ENCODE measurements at regions of chr17 and their contacts with region 1.

Region 1: GRCh38 chr17:39980351-39981206 is at the start of gene PSMD3:
- DNase-seq: peak; percentile 90 to 99 (median 98)
- ATAC-seq: peak; percentile 90 to 94
- H3K4me3 Mint-ChIP-seq: peak within 1 kb of the TSS; percentile 91 to 96 (median 94)
- H3K27ac Mint-ChIP-seq: peak within 1 kb of the TSS; percentile 90 to 98 (median 96)
- H3K4me1 Mint-ChIP-seq: peaks cover 21 to 48% (median 39%) of the 10 kb centered on the region in 4 donors
- H3K27me3 Mint-ChIP-seq: no peaks in the 10 kb centered on the region
- polyA plus RNA-seq, gene PSMD3: 45.4 to 55.9 (median 51.5) TPM

Region 2: GRCh38 chr17:39872751-39873150 is 107.8 kb before region 1 on chr17:
- POLR2A ChIA-PET with region 1: interaction called, 10 read pairs
- DNase-seq: peak in 1 of 10 donors; percentile 32
- ATAC-seq: no peak
- H3K4me3 Mint-ChIP-seq: no peak overlapping the region
- H3K27ac Mint-ChIP-seq: no peak overlapping the region
- H3K4me1 Mint-ChIP-seq: peaks cover 2 to 17% (median 12%) of the 10 kb centered on the region in 4 donors
- H3K27me3 Mint-ChIP-seq: peaks cover 0 to 1% (median 0%) of the 10 kb centered on the region in 5 donors

Region 3: GRCh38 chr17:39927101-39927928 is 53.3 kb before region 1 on chr17 and contains the starts of genes LRRC3C and ORMDL3:
- POLR2A ChIA-PET with region 1: interaction called, 45 read pairs
- DNase-seq: peak; percentile 85 to 93 (median 90)
- ATAC-seq: peak; percentile 69 to 72
- H3K4me3 Mint-ChIP-seq: peak within 1 kb of the TSS; percentile 87 to 99 (median 92)
- H3K27ac Mint-ChIP-seq: peak within 1 kb of the TSS; percentile 93 to 98 (median 96)
- H3K4me1 Mint-ChIP-seq: peaks cover 24 to 55% (median 50%) of the 10 kb centered on the region in 4 donors
- H3K27me3 Mint-ChIP-seq: no peaks in the 10 kb centered on the region
- polyA plus RNA-seq, gene LRRC3C: not detected
- polyA plus RNA-seq, gene ORMDL3: 100 to 335 (median 249) TPM

Region 4: DNA sequence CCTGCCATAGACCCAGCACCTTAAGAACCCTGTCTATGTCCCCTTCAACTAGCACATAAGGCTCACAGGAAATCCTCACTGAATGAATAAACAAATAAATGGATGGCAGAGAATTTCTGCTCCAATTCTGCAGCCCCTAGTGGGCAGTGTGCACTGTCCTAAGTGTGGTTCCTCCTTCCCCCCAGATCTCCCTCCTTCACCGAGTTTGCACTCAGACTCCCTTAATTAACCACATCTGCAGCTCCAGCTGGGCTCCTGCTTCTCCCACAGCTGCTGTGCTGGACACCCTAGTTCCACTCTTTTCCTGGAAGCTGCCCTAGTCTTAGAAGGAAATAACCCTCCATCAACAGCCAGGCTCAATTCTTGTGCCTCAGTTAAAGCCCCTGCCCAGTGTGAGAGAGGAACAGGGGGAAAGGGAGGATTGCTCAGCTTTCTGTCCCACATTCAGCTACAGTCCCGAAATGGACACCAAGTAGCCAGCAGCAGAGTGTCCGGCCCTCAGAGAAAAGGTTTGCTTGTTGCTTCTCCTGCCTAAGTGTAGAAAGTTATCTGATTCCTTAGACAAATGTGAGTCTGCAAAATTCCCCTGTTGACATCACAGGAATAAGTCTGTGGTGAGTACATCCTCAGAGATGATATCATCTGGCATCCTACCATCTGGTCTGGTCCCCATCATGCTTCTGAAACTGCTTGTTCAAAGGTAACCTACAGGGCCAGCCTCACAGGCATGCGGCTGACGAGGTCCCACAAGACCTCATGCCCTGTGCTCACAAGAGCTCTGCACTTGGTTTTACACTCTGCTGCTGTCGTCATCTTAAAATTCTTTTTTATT is 40.8 kb before region 1 on chr17:
- POLR2A ChIA-PET with region 1: no interaction called
- DNase-seq: peak in 6 of 10 donors; percentile 47 to 84 (median 54)
- ATAC-seq: peak; percentile 97 to 98
- H3K4me3 Mint-ChIP-seq: peak overlapping the region in 3 of 10 donors; percentile 0 to 19 (median 9)
- H3K27ac Mint-ChIP-seq: peak overlapping the region; percentile 12 to 96 (median 64)
- H3K4me1 Mint-ChIP-seq: peaks cover 7 to 17% (median 12%) of the 10 kb centered on the region in 4 donors
- H3K27me3 Mint-ChIP-seq: no peaks in the 10 kb centered on the region

Region 5: DNA sequence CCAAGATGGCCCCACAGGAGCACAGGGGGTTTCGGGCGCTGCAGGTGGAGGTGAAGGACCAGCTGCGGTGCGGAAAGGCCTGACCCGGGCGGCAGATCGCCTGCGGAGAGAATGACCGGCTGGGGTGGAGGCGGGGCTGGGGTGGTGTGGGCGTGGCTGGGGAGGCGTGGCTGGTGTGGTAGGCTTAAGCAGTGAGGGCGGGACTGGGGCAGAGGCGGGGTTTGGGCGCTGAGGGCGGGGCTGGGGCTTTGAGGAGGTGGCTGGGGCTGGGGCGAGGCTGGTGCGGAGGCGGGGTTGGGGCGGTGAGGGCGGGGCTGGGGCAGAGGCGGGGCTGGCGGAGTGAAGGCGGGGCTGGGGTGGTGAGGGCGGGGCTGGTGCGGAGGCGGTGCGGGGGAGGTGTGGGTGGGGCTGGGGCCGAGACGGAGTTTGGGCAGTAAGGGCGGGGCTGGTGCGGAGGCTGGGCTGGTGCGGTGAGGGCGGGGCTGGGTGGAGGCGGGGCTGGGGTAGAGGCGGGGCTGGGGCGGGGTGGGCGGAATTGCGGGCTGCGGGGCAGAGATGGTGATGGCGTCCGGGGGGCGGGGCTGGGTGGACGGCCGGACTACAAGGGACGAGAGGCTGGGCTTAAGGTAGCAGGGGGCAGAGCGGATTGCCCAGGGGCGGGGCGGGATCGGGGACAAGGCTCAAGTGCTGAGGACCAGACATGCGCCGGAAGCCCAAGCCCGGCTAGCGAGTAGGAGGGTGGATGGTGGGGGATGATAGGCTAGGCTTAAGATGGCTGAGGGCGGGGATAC is 27.7 kb before region 1 on chr17:
- POLR2A ChIA-PET with region 1: interaction called, 29 read pairs
- DNase-seq: peak; percentile 85 to 99 (median 92)
- ATAC-seq: peak; percentile 85 to 87
- H3K4me3 Mint-ChIP-seq: peak overlapping the region; percentile 78 to 93 (median 84)
- H3K27ac Mint-ChIP-seq: peak overlapping the region; percentile 65 to 95 (median 88)
- H3K4me1 Mint-ChIP-seq: peaks cover 7 to 35% (median 31%) of the 10 kb centered on the region in 4 donors
- H3K27me3 Mint-ChIP-seq: no peaks in the 10 kb centered on the region

Region 6: DNA sequence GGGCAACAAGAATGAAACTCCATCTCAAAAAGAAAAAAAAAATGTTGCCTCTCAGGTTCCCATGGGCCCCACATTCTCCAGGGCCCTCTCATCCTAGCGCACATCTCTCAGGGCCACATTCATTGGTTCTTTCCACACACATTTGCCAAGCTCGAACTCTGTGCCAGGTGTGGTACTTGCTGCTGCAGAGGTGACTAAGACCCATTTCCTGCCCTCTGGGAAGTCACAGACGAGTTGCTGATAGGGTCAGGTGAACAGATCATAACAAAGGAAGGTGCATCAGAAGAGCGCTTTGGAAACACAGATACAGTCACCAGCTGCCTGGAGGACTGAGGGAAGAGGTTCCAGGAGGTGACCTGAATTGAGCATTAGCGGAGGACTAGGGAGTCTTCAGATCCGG is 16.8 kb before region 1 on chr17:
- POLR2A ChIA-PET with region 1: interaction called, 29 read pairs
- DNase-seq: peak in 4 of 10 donors; percentile 26 to 71 (median 39)
- ATAC-seq: peak; percentile 76 to 80
- H3K4me3 Mint-ChIP-seq: peak overlapping the region in 8 of 10 donors; percentile 19 to 78 (median 56)
- H3K27ac Mint-ChIP-seq: peak overlapping the region; percentile 2 to 98 (median 78)
- H3K4me1 Mint-ChIP-seq: peaks cover 16 to 38% (median 35%) of the 10 kb centered on the region in 4 donors
- H3K27me3 Mint-ChIP-seq: peaks cover 0 to 3% (median 0%) of the 10 kb centered on the region in 5 donors

Region 7: GRCh38 chr17:40000161-40000560 is 19.6 kb after region 1 on chr17:
- POLR2A ChIA-PET with region 1: no interaction called
- DNase-seq: no peak
- ATAC-seq: no peak
- H3K4me3 Mint-ChIP-seq: no peak overlapping the region
- H3K27ac Mint-ChIP-seq: peak overlapping the region in 1 of 10 donors; percentile 15
- H3K4me1 Mint-ChIP-seq: no peaks in the 10 kb centered on the region
- H3K27me3 Mint-ChIP-seq: no peaks in the 10 kb centered on the region

Region 8: DNA sequence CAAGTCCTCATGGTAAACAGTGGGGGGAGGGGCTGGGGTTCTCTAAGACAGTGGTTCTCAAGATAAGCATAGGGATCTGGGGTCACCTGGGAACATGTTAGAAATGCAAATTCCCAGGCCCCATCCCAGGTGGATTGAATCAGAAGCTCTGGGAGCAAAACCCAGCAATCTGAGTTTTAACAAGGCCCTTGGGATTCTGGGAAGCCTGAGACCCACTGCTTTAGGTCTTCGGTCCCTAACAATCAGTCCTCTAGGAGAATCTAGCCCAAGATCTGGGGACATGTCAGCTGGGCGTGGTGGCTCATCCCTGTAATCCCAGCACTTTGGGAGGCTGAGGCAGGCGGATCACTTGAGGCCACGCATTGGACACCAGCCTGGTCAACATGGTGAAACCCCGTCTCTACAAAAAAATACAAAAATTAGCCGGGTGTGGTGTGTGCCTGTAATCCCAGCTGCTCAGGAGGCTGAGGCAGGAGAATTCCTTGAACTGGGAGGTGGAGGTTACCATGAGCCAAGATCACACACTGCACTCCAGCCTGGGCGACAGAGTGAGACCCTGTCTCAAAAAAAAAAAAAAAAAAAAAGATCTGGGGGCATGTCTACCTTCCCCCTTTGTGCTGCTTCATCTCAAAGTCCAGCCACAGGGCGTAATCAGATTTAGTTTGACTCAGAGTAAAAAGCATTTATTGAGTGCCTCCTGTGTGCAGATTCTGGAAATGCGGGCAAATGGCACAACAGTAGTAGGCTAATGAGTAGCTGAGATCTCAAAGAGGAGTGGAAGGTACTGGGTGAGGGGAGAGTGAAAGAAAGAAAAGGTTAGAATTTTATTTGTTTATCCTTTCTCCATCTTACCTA is 128.6 kb after region 1 on chr17:
- POLR2A ChIA-PET with region 1: no interaction called
- DNase-seq: peak in 1 of 10 donors; percentile 14
- ATAC-seq: no peak
- H3K4me3 Mint-ChIP-seq: peak overlapping the region in 9 of 10 donors; percentile 2 to 84 (median 48)
- H3K27ac Mint-ChIP-seq: peak overlapping the region; percentile 95 to 100 (median 99)
- H3K4me1 Mint-ChIP-seq: peaks cover 74 to 96% (median 95%) of the 10 kb centered on the region in 4 donors
- H3K27me3 Mint-ChIP-seq: no peaks in the 10 kb centered on the region

Region 9: DNA sequence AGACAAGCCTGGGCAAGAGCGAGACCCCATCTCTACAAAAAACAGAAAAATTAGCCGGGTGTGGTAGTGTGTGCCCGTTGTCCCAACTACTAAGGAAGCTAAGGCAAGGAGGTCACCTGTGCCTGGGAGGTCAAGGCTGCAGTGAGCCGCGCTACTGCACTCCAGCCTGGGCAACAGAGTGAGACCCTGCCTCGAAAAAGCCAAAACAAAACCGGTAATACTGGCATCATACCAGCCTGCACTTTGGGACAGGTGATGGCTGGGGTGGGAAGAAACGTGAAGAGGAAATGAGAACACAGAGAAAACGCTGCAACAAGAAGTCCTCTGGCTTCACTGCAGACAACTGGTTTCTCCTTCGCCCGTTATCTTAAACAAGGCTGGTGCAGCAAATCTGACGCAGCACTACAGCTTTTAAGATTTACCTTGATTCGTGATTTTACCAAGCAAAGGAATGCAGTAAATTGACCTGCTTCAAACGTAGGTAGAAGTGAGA is 159.0 kb after region 1 on chr17:
- POLR2A ChIA-PET with region 1: interaction called, 13 read pairs
- DNase-seq: peak in 1 of 10 donors; percentile 11
- ATAC-seq: peak in 1 of 2 donors; percentile 26
- H3K4me3 Mint-ChIP-seq: peak overlapping the region; percentile 86 to 98 (median 95)
- H3K27ac Mint-ChIP-seq: peak overlapping the region; percentile 95 to 100 (median 99)
- H3K4me1 Mint-ChIP-seq: peaks cover 14 to 51% (median 41%) of the 10 kb centered on the region in 4 donors
- H3K27me3 Mint-ChIP-seq: peaks cover 0 to 1% (median 0%) of the 10 kb centered on the region in 5 donors

Region 10: DNA sequence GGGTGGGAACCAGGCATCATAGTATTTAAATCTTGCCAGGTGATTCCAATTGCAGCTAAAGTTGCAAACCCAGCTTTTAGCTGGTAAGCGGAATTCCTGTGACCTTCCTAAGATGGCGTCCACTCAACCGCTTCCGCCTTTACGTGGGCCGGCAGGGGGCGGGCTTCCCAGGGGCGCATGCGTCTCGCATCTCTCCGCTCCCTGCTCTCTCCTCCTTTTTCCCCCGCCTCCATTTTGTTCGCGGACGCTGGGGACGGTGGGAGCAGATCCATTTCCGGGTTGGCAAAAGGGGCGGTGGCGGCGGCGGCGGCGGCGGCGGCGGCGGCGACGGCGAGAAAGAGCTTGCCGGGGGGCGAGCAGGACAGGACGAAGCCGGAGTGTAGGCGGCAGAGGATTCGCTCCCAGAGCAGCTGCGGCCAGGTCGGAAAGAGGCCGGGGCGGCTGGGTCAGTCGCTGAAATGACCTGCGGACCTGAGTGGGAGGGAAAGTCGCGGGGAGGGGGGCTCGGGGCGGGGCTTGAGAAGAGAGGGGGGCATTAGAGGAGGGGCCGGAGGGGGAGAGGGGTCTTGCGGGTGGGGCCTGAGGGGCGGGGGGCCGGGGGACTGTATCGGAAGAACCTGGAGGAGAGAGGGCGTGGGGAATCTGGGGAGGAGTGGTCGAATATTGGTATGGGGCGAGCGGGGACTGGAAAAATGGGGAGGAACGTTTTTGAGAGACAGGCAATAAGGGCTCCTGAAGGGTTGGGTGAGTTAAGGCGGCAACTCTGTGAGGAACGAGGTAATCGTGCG is 238.7 kb after region 1 on chr17 and contains the start of gene WIPF2:
- POLR2A ChIA-PET with region 1: interaction called, 10 read pairs
- DNase-seq: peak; percentile 93 to 98 (median 95)
- ATAC-seq: peak; percentile 86 to 88
- H3K4me3 Mint-ChIP-seq: peak within 1 kb of the TSS; percentile 82 to 99 (median 97)
- H3K27ac Mint-ChIP-seq: peak within 1 kb of the TSS; percentile 97 to 100 (median 100)
- H3K4me1 Mint-ChIP-seq: peaks cover 18 to 40% (median 39%) of the 10 kb centered on the region in 4 donors
- H3K27me3 Mint-ChIP-seq: peaks cover 0 to 1% (median 0%) of the 10 kb centered on the region in 5 donors
- polyA plus RNA-seq, gene WIPF2: 6.4 to 7.5 (median 7.5) TPM